CD4-positive, alpha-beta T cell (primary cell): ENCODE measurements at regions of chr11 and their contacts with region 1.

Region 1: GRCh38 chr11:58579192-58580129 is 598 bp downstream of the ZFP91 start:
- DNase-seq: peak; percentile 87 to 97 (median 91)
- ATAC-seq: peak; percentile 37
- H3K4me3 ChIP-seq: peak overlapping the region; percentile 87
- H3K4me3 Mint-ChIP-seq: peak overlapping the region; percentile 99
- H3K27ac ChIP-seq: peak overlapping the region; percentile 90 to 99
- H3K27ac Mint-ChIP-seq: peak overlapping the region; percentile 99
- H3K4me1 ChIP-seq: peaks cover 22% of the 10 kb centered on the region
- H3K4me1 Mint-ChIP-seq: peaks cover 76% of the 10 kb centered on the region
- H3K27me3 ChIP-seq: no peaks in the 10 kb centered on the region
- H3K27me3 Mint-ChIP-seq: no peaks in the 10 kb centered on the region
- CTCF ChIP-seq: peak; percentile 81

Region 2: GRCh38 chr11:57667736-57668435 is 911.6 kb before region 1 on chr11 and contains the start of gene ZDHHC5:
- CTCF ChIA-PET with region 1: no interaction called
- POLR2A ChIA-PET with region 1: interaction called, 6 read pairs
- intact Hi-C with region 1: loop called in 1 of 2 experiments (anchors 2 kb)
- DNase-seq: peak; percentile 98 to 100 (median 100)
- ATAC-seq: peak; percentile 83
- H3K4me3 ChIP-seq: peak within 1 kb of the TSS; percentile 87
- H3K4me3 Mint-ChIP-seq: peak within 1 kb of the TSS; percentile 89
- H3K27ac ChIP-seq: peak within 1 kb of the TSS; percentile 98
- H3K27ac Mint-ChIP-seq: peak within 1 kb of the TSS; percentile 95
- H3K4me1 ChIP-seq: peaks cover 32% of the 10 kb centered on the region
- H3K4me1 Mint-ChIP-seq: peaks cover 55% of the 10 kb centered on the region
- H3K27me3 ChIP-seq: no peaks in the 10 kb centered on the region
- H3K27me3 Mint-ChIP-seq: no peaks in the 10 kb centered on the region
- CTCF ChIP-seq: peak; percentile 52
- total RNA-seq, gene ZDHHC5: 59.7 to 61.1 TPM

Region 3: DNA sequence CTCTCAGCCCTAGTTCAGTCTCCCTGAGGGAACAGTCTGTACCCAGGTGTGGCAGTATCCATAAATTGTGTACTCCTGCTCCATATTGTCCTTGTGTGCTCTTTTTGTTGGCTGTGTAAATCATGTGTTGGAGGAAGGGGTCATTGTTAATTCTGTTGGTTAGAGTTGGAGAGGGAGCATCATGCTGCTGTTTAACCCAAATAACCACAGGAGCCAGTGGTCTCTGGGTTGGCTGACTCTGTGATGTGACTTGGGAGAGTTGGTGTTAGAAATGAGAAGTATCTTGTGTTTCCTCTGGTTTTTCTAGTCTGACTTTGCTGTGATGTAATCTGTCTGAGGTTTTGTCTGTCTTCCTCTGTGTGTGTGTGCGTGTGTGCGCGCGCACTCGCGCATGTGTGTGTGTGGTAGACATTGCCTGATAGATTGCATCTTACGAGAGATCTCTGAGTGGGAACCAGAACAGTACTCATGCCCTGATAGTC is 787.4 kb before region 1 on chr11:
- CTCF ChIA-PET with region 1: no interaction called
- POLR2A ChIA-PET with region 1: no interaction called
- intact Hi-C with region 1: loop called in 1 of 2 experiments (anchors 5 kb)
- DNase-seq: peak; percentile 76 to 97 (median 84)
- ATAC-seq: peak; percentile 94
- H3K4me3 ChIP-seq: peak overlapping the region; percentile 21
- H3K4me3 Mint-ChIP-seq: peak overlapping the region; percentile 80
- H3K27ac ChIP-seq: peak overlapping the region; percentile 79 to 83
- H3K27ac Mint-ChIP-seq: peak overlapping the region; percentile 95
- H3K4me1 ChIP-seq: peaks cover 31% of the 10 kb centered on the region
- H3K4me1 Mint-ChIP-seq: peaks cover 34% of the 10 kb centered on the region
- H3K27me3 ChIP-seq: no peaks in the 10 kb centered on the region
- H3K27me3 Mint-ChIP-seq: no peaks in the 10 kb centered on the region
- CTCF ChIP-seq: no peak

Region 4: DNA sequence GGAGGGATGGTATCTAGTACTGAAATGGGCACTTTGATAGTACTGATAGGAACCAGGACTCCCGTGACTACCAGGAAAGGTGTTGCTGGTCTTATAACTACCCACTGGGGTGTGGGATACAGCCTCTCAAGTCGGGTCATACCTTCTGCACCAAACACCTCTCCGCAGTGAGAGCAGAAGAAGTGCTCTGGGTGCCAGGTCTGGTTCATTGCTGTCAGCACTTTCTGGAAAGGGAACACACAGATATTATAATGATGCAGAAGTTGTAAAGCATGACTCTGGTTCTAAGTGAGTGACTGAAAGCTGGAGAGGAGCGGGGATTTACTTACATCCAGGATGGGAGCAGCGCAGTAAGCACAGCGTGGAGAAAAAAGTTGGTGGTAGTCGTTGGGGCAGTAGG is 29.8 kb before region 1 on chr11:
- CTCF ChIA-PET with region 1: no interaction called
- POLR2A ChIA-PET with region 1: interaction called, 12 read pairs
- intact Hi-C with region 1: no loop called
- DNase-seq: no peak
- ATAC-seq: no peak
- H3K4me3 ChIP-seq: no peak overlapping the region
- H3K4me3 Mint-ChIP-seq: no peak overlapping the region
- H3K27ac ChIP-seq: no peak overlapping the region
- H3K27ac Mint-ChIP-seq: no peak overlapping the region
- H3K4me1 ChIP-seq: no peaks in the 10 kb centered on the region
- H3K4me1 Mint-ChIP-seq: peaks cover 18% of the 10 kb centered on the region
- H3K27me3 ChIP-seq: no peaks in the 10 kb centered on the region
- H3K27me3 Mint-ChIP-seq: no peaks in the 10 kb centered on the region
- CTCF ChIP-seq: no peak

Region 5: GRCh38 chr11:58622344-58622743 is 42.9 kb after region 1 on chr11 and contains the start of gene CNTF:
- CTCF ChIA-PET with region 1: no interaction called
- POLR2A ChIA-PET with region 1: interaction called, 5 read pairs
- intact Hi-C with region 1: loop called in 1 of 2 experiments (anchors 5 kb)
- DNase-seq: no peak
- ATAC-seq: no peak
- H3K4me3 ChIP-seq: no peak within 1 kb of the TSS
- H3K4me3 Mint-ChIP-seq: no peak within 1 kb of the TSS
- H3K27ac ChIP-seq: no peak within 1 kb of the TSS
- H3K27ac Mint-ChIP-seq: peak within 1 kb of the TSS; percentile 71
- H3K4me1 ChIP-seq: no peaks in the 10 kb centered on the region
- H3K4me1 Mint-ChIP-seq: peaks cover 12% of the 10 kb centered on the region
- H3K27me3 ChIP-seq: no peaks in the 10 kb centered on the region
- H3K27me3 Mint-ChIP-seq: no peaks in the 10 kb centered on the region
- CTCF ChIP-seq: no peak
- total RNA-seq, gene CNTF: 3.1 to 3.9 TPM

Region 6: GRCh38 chr11:58726737-58727414 is 147.4 kb after region 1 on chr11:
- CTCF ChIA-PET with region 1: no interaction called
- POLR2A ChIA-PET with region 1: interaction called, 8 read pairs
- intact Hi-C with region 1: loop called in 1 of 2 experiments (anchors 5 kb)
- DNase-seq: peak in 5 of 14 experiments; percentile 13 to 52 (median 35)
- ATAC-seq: peak; percentile 90
- H3K4me3 ChIP-seq: no peak overlapping the region
- H3K4me3 Mint-ChIP-seq: peak overlapping the region; percentile 30
- H3K27ac ChIP-seq: peak overlapping the region; percentile 48 to 62
- H3K27ac Mint-ChIP-seq: peak overlapping the region; percentile 93
- H3K4me1 ChIP-seq: peaks cover 28% of the 10 kb centered on the region
- H3K4me1 Mint-ChIP-seq: peaks cover 46% of the 10 kb centered on the region
- H3K27me3 ChIP-seq: no peaks in the 10 kb centered on the region
- H3K27me3 Mint-ChIP-seq: no peaks in the 10 kb centered on the region
- CTCF ChIP-seq: no peak

Region 7: DNA sequence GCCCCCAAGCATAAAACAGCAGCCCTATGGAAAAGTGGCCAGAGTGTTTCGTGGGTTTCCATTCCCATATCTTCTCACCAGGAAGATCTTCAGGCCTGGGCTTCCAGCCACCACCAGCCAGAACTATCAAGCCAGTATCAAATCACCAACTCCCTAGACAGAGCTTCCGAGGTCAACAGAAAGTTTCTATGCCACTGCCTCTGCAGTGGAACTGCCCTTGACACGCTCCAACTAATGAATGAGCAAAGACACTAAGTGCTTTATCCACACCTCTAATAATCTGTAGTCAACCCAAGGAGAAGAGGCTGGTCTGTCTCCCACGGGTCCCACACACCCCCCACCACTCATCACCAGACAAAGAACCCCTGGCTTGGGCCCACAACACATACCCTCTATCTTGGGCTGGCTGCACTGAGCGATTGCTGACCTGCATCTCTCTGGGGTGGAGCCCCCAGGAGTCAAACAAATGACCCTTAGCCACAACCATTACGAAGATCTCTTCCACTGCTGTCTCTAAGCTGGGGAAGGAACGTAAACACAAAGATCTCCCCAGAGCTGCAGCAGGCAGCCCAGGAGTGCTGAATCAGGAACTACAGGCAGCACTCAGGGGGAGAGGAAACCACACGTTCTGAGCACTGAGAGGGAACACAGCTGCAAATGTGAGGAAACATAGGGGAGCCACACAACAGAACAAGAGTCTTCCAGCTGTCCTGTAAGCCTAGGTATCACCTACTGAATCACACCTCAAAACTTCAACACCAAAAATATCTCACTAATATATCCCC is 789.0 kb after region 1 on chr11:
- CTCF ChIA-PET with region 1: no interaction called
- POLR2A ChIA-PET with region 1: no interaction called
- intact Hi-C with region 1: no loop called
- DNase-seq: peak in 1 of 14 experiments; percentile 2
- ATAC-seq: no peak
- H3K4me3 ChIP-seq: no peak overlapping the region
- H3K4me3 Mint-ChIP-seq: no peak overlapping the region
- H3K27ac ChIP-seq: no peak overlapping the region
- H3K27ac Mint-ChIP-seq: no peak overlapping the region
- H3K4me1 ChIP-seq: no peaks in the 10 kb centered on the region
- H3K4me1 Mint-ChIP-seq: no peaks in the 10 kb centered on the region
- H3K27me3 ChIP-seq: no peaks in the 10 kb centered on the region
- H3K27me3 Mint-ChIP-seq: peaks cover 18% of the 10 kb centered on the region
- CTCF ChIP-seq: no peak

Region 8: GRCh38 chr11:59615637-59616395 is 1036.4 kb after region 1 on chr11 and contains the start of gene OSBP:
- CTCF ChIA-PET with region 1: no interaction called
- POLR2A ChIA-PET with region 1: interaction called, 3 read pairs
- intact Hi-C with region 1: loop called in 1 of 2 experiments (anchors 10 kb)
- DNase-seq: peak; percentile 93 to 100 (median 96)
- ATAC-seq: peak; percentile 74
- H3K4me3 ChIP-seq: peak within 1 kb of the TSS; percentile 68
- H3K4me3 Mint-ChIP-seq: peak within 1 kb of the TSS; percentile 96
- H3K27ac ChIP-seq: peak within 1 kb of the TSS; percentile 90 to 99
- H3K27ac Mint-ChIP-seq: peak within 1 kb of the TSS; percentile 77
- H3K4me1 ChIP-seq: peaks cover 22% of the 10 kb centered on the region
- H3K4me1 Mint-ChIP-seq: peaks cover 48% of the 10 kb centered on the region
- H3K27me3 ChIP-seq: no peaks in the 10 kb centered on the region
- H3K27me3 Mint-ChIP-seq: no peaks in the 10 kb centered on the region
- CTCF ChIP-seq: no peak
- total RNA-seq, gene OSBP: 54.9 to 58.2 TPM